ENCODE measurements at regions of chr1 and their contacts with region 1.

Region 1: DNA sequence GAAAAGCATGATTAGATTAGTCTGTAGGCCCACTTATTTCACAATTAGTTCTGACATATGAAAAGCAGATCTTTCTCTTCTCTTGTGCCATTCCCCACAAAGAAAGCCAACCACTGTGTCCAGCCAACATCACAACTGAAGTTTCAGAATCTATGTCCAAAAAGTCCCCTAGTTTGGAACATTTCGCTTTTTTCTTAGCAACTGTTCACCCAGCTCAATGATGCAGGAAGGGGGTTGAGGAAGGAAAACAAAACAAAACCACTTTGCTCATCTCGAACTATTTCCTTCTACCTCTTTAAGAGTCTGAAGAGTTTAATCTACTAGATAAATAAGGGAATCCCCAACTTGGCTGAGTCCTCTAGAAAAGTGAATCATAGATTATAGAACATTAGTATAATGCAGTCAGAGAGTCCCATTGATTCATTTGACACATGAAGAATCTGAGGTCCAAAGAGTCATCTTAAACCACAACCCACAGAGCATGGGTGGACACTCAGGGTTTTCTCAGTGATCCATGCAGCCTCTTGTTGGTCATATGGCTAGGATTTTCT is 159.3 kb upstream of the SGIP1 start:
- DNase-seq: peak; percentile 71
- H3K4me3 Mint-ChIP-seq: peak overlapping the region; percentile 64
- H3K27ac Mint-ChIP-seq: peak overlapping the region; percentile 99
- H3K4me1 Mint-ChIP-seq: peaks cover 76% of the 10 kb centered on the region
- H3K27me3 Mint-ChIP-seq: no peaks in the 10 kb centered on the region

Region 2: GRCh38 chr1:65419681-65420589 is 954.7 kb before region 1 on chr1:
- CTCF ChIA-PET with region 1: no interaction called
- POLR2A ChIA-PET with region 1: no interaction called
- intact Hi-C with region 1: loop called (anchors 1 kb)
- DNase-seq: peak; percentile 99
- H3K4me3 Mint-ChIP-seq: peak overlapping the region; percentile 90
- H3K27ac Mint-ChIP-seq: peak overlapping the region; percentile 88
- H3K4me1 Mint-ChIP-seq: peaks cover 21% of the 10 kb centered on the region
- H3K27me3 Mint-ChIP-seq: no peaks in the 10 kb centered on the region

Region 3: DNA sequence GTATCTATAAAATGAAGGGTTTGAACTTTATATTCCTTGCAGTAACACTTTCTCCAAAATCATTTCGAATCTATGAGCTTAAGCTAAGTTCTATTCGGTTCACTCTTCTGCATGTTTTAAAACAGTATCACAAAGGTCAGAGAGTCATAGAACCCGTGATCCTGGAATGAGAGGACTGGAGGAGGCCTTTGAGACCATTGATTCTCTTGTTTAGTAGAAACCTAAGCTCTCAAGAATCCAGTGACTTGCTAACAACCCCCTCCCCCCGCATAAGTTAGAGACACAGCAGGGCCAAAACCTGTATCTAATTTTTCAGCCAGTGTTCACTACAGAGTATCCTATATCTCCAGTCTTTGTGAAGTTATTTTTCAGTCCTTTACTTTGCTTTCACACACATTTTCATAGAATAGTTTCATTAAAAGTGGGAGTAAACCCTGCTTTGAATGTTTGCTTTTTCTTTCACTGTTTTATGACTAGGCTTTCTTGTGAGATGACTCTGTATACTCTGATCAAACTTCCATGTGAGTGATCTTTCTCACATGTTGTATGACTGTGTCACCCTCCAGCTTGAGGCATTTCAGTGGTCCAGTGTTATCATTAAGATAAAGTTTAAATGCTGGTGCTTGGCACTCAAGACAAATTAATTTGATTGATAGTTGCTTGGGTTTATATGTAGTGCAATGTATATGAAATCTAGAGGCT is 116.1 kb before region 1 on chr1:
- CTCF ChIA-PET with region 1: interaction called, 4 read pairs
- POLR2A ChIA-PET with region 1: no interaction called
- intact Hi-C with region 1: loop called (anchors 1 kb)
- DNase-seq: no peak
- H3K4me3 Mint-ChIP-seq: no peak overlapping the region
- H3K27ac Mint-ChIP-seq: peak overlapping the region; percentile 64
- H3K4me1 Mint-ChIP-seq: peaks cover 85% of the 10 kb centered on the region
- H3K27me3 Mint-ChIP-seq: no peaks in the 10 kb centered on the region

Region 4: GRCh38 chr1:66300972-66301451 is 73.6 kb before region 1 on chr1:
- CTCF ChIA-PET with region 1: no interaction called
- POLR2A ChIA-PET with region 1: no interaction called
- intact Hi-C with region 1: loop called (anchors 1 kb)
- DNase-seq: peak; percentile 60
- H3K4me3 Mint-ChIP-seq: peak overlapping the region; percentile 65
- H3K27ac Mint-ChIP-seq: peak overlapping the region; percentile 77
- H3K4me1 Mint-ChIP-seq: peaks cover 50% of the 10 kb centered on the region
- H3K27me3 Mint-ChIP-seq: no peaks in the 10 kb centered on the region

Region 5: DNA sequence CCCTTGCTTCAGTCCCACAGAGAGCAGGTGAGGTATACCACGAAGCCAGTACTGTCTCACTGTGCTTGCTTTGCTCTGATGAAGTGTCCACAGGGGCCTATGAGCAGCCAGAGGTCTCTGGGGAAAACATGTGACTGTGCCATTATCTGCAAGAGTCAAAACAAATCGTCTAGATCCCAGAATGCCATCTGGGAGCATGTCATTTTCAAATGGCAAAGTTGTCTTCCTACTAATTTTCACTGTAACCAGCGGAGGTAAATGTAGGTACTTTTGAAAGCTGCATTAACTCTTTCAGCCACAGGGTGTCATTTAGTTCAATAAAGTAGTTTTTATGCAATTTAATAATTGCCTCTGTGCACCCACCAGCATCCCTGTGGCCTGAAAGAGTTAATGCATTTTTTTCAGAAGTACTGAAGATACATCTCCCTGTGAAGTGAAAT is 14.3 kb before region 1 on chr1:
- CTCF ChIA-PET with region 1: interaction called, 8 read pairs
- POLR2A ChIA-PET with region 1: interaction called, 10 read pairs
- intact Hi-C with region 1: no loop called
- DNase-seq: no peak
- H3K4me3 Mint-ChIP-seq: no peak overlapping the region
- H3K27ac Mint-ChIP-seq: no peak overlapping the region
- H3K4me1 Mint-ChIP-seq: peaks cover 83% of the 10 kb centered on the region
- H3K27me3 Mint-ChIP-seq: no peaks in the 10 kb centered on the region

Region 6: DNA sequence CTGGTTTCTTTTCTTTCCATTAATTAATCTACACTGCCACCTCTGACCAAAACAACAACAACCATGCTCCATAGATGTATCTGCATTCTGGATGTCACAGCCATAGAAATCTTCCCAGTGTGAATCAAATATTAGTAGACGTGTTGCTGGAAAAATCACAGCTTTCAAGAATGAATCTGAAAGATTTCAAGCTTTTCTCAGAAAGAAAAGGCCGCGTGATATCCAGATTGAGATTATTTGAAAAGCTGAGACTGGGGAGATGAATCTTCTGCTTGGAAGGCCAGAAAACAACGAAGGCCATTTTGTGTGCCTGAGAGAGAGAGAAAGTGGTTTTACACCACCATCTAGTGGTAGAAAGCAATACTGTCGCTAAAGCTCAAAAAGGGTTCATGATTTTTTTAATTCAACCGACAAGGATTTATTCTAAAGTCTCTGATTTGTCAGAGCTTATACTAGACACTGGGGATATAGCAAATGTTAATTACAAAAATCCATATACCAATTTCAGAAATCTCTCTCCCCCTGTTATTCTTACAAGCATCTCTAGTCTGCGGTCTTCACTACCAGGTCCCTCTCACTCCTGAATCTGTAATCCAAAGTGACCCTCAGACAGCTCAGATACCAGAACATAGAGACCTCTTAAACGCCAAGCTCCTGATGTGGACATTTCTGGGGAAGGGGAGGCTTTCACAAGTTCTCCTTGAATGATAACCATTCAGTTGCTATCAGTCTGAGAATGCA is 71.8 kb after region 1 on chr1:
- CTCF ChIA-PET with region 1: interaction called, 110 read pairs
- POLR2A ChIA-PET with region 1: interaction called, 10 read pairs
- intact Hi-C with region 1: loop called (anchors 1 kb)
- DNase-seq: peak; percentile 23
- H3K4me3 Mint-ChIP-seq: peak overlapping the region; percentile 6
- H3K27ac Mint-ChIP-seq: peak overlapping the region; percentile 86
- H3K4me1 Mint-ChIP-seq: peaks cover 21% of the 10 kb centered on the region
- H3K27me3 Mint-ChIP-seq: peaks cover 4% of the 10 kb centered on the region

Measured in activated CD4-positive, alpha-beta memory T cell treated with anti-CD3 and anti-CD28 coated beads for 36 hours (primary cell).